AG04450 (cell line): ENCODE measurements at regions of chr2 and their contacts with region 1.

Region 1: DNA sequence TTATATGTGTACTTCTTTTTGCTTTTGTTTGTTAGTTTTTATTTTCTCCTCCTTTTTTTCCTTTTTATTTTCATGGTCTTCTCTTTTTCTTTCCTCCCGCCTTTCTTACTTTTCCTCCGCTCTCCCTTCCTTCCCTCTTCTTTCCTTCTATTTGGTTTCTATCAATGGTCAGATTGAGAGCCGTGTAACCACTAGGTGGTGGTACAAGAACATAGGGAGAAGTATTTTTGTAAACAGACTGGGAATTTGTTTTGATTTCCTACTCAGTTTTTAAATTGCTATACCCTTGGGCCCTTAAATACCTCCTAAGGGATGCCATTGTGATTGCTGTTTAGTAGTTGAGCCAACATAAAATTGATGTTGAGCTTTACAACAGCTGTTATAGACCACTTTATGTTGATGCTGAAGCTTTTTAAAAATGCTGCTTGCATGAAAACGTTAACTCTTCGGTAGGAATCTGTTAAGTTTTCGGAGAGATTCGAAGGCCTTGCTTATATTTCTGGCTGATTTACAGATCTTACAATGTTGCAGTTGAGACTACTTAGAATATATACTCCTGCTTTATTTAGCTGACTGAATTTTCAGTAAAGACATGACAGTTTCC is 124.2 kb downstream of the UBE2E3 start:
- DNase-seq: peak; percentile 46
- H3K4me3 ChIP-seq: no peak overlapping the region
- H3K27ac ChIP-seq: no peak overlapping the region
- H3K27me3 ChIP-seq: no peaks in the 10 kb centered on the region
- CTCF ChIP-seq: peak; percentile 90

Region 2: DNA sequence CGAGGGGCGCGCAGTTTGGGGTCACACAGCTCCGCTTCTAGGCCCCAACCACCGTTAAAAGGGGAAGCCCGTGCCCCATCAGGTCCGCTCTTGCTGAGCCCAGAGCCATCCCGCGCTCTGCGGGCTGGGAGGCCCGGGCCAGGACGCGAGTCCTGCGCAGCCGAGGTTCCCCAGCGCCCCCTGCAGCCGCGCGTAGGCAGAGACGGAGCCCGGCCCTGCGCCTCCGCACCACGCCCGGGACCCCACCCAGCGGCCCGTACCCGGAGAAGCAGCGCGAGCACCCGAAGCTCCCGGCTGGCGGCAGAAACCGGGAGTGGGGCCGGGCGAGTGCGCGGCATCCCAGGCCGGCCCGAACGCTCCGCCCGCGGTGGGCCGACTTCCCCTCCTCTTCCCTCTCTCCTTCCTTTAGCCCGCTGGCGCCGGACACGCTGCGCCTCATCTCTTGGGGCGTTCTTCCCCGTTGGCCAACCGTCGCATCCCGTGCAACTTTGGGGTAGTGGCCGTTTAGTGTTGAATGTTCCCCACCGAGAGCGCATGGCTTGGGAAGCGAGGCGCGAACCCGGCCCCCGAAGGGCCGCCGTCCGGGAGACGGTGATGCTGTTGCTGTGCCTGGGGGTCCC is 352.6 kb after region 1 on chr2 and contains the start of gene ITGA4:
- CTCF ChIA-PET with region 1: interaction called, 50 read pairs
- POLR2A ChIA-PET with region 1: no interaction called
- DNase-seq: peak; percentile 34
- H3K4me3 ChIP-seq: peak within 1 kb of the TSS; percentile 74
- H3K27ac ChIP-seq: peak within 1 kb of the TSS; percentile 31
- H3K27me3 ChIP-seq: no peaks in the 10 kb centered on the region
- CTCF ChIP-seq: peak; percentile 74
- polyA plus RNA-seq, gene ITGA4: 10.6 and 16.7 TPM in 2 replicates

Region 3: DNA sequence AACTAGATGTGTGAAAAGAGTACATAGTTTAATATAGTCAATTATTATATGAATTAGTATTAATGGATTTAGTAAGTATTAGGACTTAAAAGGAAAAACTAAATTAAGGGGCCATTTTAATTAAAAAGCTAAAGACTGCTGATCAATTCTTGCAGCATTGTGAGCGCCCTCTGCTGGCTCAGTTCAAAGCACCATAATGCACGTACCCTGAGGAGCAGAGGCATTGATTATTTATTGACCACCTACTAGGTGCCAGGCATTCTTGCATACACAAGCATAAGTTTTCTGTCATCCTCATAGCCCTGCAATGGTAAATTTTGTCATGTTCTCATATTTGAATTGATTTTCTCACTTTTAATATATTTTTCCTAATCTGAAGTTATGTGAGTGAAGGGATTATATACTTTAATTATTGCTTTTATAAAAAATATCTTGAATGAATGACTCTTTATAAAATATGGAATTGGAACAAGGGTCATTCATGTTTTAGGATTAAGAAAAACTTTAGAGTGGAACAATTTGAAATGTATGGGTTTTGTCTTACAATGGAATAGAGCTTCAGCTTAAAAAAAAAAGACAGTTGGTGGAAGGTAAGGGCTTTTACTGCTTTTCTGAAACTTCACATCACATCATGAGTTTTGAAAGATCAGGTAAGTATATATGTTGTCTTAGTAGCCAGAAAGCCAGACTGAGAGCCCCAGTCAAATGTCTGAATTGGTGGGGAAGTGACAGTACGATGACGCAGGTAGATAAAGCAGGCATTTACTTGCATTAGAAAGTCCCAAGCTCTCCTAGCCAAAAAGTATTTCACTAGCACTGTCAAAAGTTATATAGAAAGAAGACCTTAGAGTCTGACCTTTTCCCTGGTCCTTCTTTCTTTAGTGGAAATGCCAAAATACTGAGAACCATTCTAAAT is 362.3 kb after region 1 on chr2:
- CTCF ChIA-PET with region 1: interaction called, 95 read pairs
- POLR2A ChIA-PET with region 1: no interaction called
- DNase-seq: peak; percentile 20
- H3K4me3 ChIP-seq: no peak overlapping the region
- H3K27ac ChIP-seq: no peak overlapping the region
- H3K27me3 ChIP-seq: no peaks in the 10 kb centered on the region
- CTCF ChIP-seq: peak; percentile 88